Mucosa of descending colon (tissue), 3 donors: ENCODE measurements at regions of chr17 and their contacts with region 1.

Region 1: DNA sequence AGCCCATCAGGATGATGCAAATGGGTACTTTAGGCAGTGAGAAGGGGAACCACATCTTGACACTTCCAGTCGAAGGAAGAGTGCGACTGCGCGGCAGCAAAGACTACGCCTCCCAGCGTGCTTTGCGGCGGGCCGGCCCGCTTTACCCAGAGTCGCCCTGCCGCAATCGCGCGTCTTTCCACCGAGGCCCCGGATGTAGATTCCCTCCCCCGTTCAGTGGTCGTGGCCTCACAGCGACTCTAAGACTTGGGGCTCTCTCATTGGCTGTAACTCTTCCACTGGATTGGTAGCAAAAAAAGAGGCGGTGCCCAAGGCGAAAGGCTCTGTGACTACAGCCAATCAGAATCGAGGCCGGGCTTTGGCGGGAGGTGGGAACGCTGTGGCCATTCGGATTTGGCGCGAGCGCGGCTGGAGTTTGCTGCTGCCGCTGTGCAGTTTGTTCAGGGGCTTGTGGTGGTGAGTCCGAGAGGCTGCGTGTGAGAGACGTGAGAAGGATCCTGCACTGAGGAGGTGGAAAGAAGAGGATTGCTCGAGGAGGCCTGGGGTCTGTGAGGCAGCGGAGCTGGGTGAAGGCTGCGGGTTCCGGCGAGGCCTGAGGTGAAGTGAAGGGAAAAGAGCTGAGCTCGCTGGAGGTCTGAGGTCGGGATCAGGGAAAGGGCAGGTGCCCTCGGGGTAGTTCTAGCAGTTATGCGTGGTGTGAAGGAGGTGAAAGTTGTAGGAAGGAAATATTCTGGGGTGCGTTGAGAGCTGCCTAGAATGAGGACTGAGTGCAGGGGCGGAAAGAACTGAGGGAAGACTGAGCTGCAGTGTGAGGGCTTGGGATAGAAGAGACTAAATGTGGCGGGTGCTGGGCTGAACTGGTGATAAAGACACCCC is at the start of gene CDC6:
- DNase-seq: peak; percentile 98 to 99 (median 99)
- ATAC-seq: peak; percentile 89
- H3K4me3 ChIP-seq: peak within 1 kb of the TSS; percentile 27
- H3K4me1 ChIP-seq: peaks cover 36% of the 10 kb centered on the region
- CTCF ChIP-seq: no peak
- total RNA-seq, gene CDC6: 4.0 to 14.9 (median 7.4) TPM

Region 2: GRCh38 chr17:40157973-40158372 is 129.8 kb before region 1 on chr17:
- intact Hi-C with region 1: no loop called
- DNase-seq: no peak
- ATAC-seq: no peak
- H3K4me3 ChIP-seq: no peak overlapping the region
- H3K4me1 ChIP-seq: peaks cover 3% of the 10 kb centered on the region
- CTCF ChIP-seq: no peak

Region 3: GRCh38 chr17:40191237-40192208 is 96.2 kb before region 1 on chr17:
- intact Hi-C with region 1: loop called in 1 of 2 experiments (anchors 10 kb)
- DNase-seq: peak; percentile 68 to 71 (median 71)
- ATAC-seq: peak; percentile 63
- H3K4me3 ChIP-seq: peak overlapping the region; percentile 22
- H3K4me1 ChIP-seq: no peaks in the 10 kb centered on the region
- CTCF ChIP-seq: peak; percentile 18

Region 4: GRCh38 chr17:40203131-40203530 is 84.6 kb before region 1 on chr17:
- intact Hi-C with region 1: loop called (anchors 5 to 10 kb)
- DNase-seq: no peak
- ATAC-seq: peak; percentile 67
- H3K4me3 ChIP-seq: no peak overlapping the region
- H3K4me1 ChIP-seq: peaks cover 7% of the 10 kb centered on the region
- CTCF ChIP-seq: no peak